ENCODE measurements at regions of chr4 and their contacts with region 1.

Region 1: GRCh38 chr4:39469429-39470077 is 10.7 kb downstream of the LIAS start:
- DNase-seq: no peak
- H3K4me3 ChIP-seq: no peak overlapping the region
- H3K27ac ChIP-seq: peak overlapping the region in 3 of 4 donors; percentile 37 to 59 (median 50)
- H3K4me1 ChIP-seq: peaks cover 0 to 8% (median 0%) of the 10 kb centered on the region in 4 donors
- H3K27me3 ChIP-seq: no peaks in the 10 kb centered on the region
- CTCF ChIP-seq: peak; percentile 63 to 85 (median 74)
- EP300 ChIP-seq: no peak
- POLR2A ChIP-seq: no peak

Region 2: GRCh38 chr4:39181905-39182638 is 287.5 kb before region 1 on chr4 and contains the start of gene WDR19:
- intact Hi-C with region 1: loop called (anchors 5 kb)
- DNase-seq: peak; percentile 99
- H3K4me3 ChIP-seq: peak within 1 kb of the TSS; percentile 64 to 83 (median 76)
- H3K27ac ChIP-seq: peak within 1 kb of the TSS; percentile 71 to 80 (median 79)
- H3K4me1 ChIP-seq: peaks cover 0 to 21% (median 14%) of the 10 kb centered on the region in 4 donors
- H3K27me3 ChIP-seq: no peaks in the 10 kb centered on the region
- CTCF ChIP-seq: peak; percentile 41 to 54 (median 46)
- EP300 ChIP-seq: peak in 1 of 4 donors; percentile 47
- POLR2A ChIP-seq: no peak
- total RNA-seq, gene WDR19: 49.9 to 62.0 (median 52.2) TPM

Region 3: DNA sequence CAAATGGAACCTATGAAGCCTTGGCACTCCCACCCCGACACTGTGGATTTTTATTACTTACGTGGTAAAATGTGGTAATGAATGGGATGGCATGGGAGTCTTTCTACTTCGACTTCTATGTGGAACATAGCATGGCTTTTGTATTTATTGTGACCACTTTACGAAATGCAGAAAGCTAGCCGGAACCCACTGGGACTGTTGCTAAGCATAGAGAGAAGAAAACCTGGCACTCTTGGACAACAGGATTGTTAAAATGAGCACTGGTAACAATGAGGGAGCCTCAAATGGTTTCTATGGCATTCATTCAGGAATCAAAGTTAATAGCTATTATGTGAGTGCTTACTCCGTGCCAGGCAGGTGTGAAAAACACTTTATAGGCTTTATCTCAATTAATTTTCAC is 394.9 kb after region 1 on chr4:
- intact Hi-C with region 1: loop called (anchors 10 kb)
- DNase-seq: no peak
- H3K4me3 ChIP-seq: no peak overlapping the region
- H3K27ac ChIP-seq: no peak overlapping the region
- H3K4me1 ChIP-seq: no peaks in the 10 kb centered on the region
- H3K27me3 ChIP-seq: no peaks in the 10 kb centered on the region
- CTCF ChIP-seq: no peak
- EP300 ChIP-seq: no peak
- POLR2A ChIP-seq: no peak

Region 4: DNA sequence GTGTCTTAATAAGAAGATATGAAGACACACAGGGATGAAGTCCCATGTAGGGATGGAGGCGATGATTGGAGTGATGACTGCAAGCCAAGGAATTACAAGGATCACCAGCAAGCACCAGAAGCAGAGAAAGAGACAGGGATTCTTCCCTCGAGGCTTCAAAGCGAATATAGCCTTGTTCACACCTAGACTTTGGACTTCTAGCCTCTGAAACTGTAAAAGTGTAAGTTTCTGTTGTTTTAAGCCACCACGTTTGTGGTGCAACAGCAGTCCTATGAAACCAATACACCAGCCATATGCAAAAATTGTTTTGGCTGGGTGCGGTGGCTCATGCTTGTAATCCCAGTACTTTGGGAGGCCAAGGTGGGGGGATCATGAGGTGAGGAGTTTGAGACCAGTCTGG is 517.9 kb after region 1 on chr4:
- intact Hi-C with region 1: no loop called
- DNase-seq: no peak
- H3K4me3 ChIP-seq: no peak overlapping the region
- H3K27ac ChIP-seq: no peak overlapping the region
- H3K4me1 ChIP-seq: no peaks in the 10 kb centered on the region
- H3K27me3 ChIP-seq: no peaks in the 10 kb centered on the region
- CTCF ChIP-seq: no peak
- EP300 ChIP-seq: no peak
- POLR2A ChIP-seq: no peak

Measured in sigmoid colon (tissue), 7 donors.